Activated CD4-positive, alpha-beta memory T cell treated with anti-CD3 and anti-CD28 coated beads for 36 hours (primary cell): ENCODE measurements at regions of chr6 and their contacts with region 1.

Region 1: GRCh38 chr6:90000864-90001731 is 106.8 kb downstream of the GJA10 start:
- DNase-seq: peak; percentile 76
- H3K4me3 Mint-ChIP-seq: no peak overlapping the region
- H3K27ac Mint-ChIP-seq: no peak overlapping the region
- H3K4me1 Mint-ChIP-seq: peaks cover 19% of the 10 kb centered on the region
- H3K27me3 Mint-ChIP-seq: no peaks in the 10 kb centered on the region

Region 2: DNA sequence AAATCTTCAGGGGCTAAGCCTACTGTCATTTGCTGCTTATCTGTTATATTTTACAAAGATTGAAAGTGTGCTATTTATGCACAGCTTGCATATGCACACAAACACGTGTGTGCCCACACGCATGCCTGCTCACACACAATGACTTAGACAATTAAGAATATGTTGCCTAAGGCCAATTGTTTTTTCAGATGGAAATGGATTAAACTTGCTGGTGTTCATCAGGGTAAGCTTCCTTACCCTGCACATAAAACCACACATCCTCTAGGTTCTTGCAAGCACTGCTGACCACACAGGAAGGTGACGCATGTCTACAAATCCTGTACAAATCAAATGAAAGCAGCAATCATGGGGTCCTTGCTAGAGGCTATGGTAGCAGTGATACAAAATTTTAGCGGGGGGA is 48.4 kb before region 1 on chr6:
- CTCF ChIA-PET with region 1: interaction called, 3 read pairs
- POLR2A ChIA-PET with region 1: interaction called, 3 read pairs
- intact Hi-C with region 1: loop called (anchors 1 kb)
- DNase-seq: peak; percentile 72
- H3K4me3 Mint-ChIP-seq: peak overlapping the region; percentile 8
- H3K27ac Mint-ChIP-seq: peak overlapping the region; percentile 69
- H3K4me1 Mint-ChIP-seq: peaks cover 68% of the 10 kb centered on the region
- H3K27me3 Mint-ChIP-seq: no peaks in the 10 kb centered on the region

Region 3: GRCh38 chr6:89978749-89979145 is 22.4 kb before region 1 on chr6:
- CTCF ChIA-PET with region 1: interaction called, 3 read pairs
- POLR2A ChIA-PET with region 1: interaction called, 4 read pairs
- intact Hi-C with region 1: loop called (anchors 1 kb)
- DNase-seq: no peak
- H3K4me3 Mint-ChIP-seq: no peak overlapping the region
- H3K27ac Mint-ChIP-seq: no peak overlapping the region
- H3K4me1 Mint-ChIP-seq: peaks cover 16% of the 10 kb centered on the region
- H3K27me3 Mint-ChIP-seq: no peaks in the 10 kb centered on the region

Region 4: GRCh38 chr6:89985751-89986493 is 15.2 kb before region 1 on chr6:
- CTCF ChIA-PET with region 1: interaction called, 3 read pairs
- POLR2A ChIA-PET with region 1: interaction called, 5 read pairs
- intact Hi-C with region 1: loop called (anchors 1 kb)
- DNase-seq: no peak
- H3K4me3 Mint-ChIP-seq: no peak overlapping the region
- H3K27ac Mint-ChIP-seq: peak overlapping the region; percentile 29
- H3K4me1 Mint-ChIP-seq: peaks cover 70% of the 10 kb centered on the region
- H3K27me3 Mint-ChIP-seq: no peaks in the 10 kb centered on the region

Region 5: DNA sequence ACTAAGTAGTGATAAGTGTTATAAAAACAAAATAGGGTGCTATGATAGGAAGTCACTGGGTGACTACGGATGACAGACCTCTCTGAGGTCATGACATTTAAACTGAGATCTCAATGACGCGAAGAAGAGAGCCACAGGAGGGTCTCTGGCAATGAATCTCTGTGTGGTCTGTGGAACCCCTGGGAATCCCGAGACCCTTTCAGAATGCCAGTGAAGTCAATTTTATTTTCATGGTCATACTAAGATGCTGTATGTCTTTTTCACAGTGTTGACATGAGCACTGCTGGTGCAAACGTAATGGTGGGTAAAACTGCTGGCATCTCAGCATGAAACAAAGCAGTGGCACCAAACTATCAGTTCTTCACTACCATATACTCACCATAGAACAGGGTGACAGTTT is 48.2 kb after region 1 on chr6:
- CTCF ChIA-PET with region 1: no interaction called
- POLR2A ChIA-PET with region 1: interaction called, 3 read pairs
- intact Hi-C with region 1: loop called (anchors 2 kb)
- DNase-seq: peak; percentile 44
- H3K4me3 Mint-ChIP-seq: peak overlapping the region; percentile 18
- H3K27ac Mint-ChIP-seq: peak overlapping the region; percentile 89
- H3K4me1 Mint-ChIP-seq: peaks cover 51% of the 10 kb centered on the region
- H3K27me3 Mint-ChIP-seq: no peaks in the 10 kb centered on the region